Dorsolateral prefrontal cortex (tissue), 120 donors: ENCODE measurements at regions of chr10 and their contacts with region 1.

Region 1: DNA sequence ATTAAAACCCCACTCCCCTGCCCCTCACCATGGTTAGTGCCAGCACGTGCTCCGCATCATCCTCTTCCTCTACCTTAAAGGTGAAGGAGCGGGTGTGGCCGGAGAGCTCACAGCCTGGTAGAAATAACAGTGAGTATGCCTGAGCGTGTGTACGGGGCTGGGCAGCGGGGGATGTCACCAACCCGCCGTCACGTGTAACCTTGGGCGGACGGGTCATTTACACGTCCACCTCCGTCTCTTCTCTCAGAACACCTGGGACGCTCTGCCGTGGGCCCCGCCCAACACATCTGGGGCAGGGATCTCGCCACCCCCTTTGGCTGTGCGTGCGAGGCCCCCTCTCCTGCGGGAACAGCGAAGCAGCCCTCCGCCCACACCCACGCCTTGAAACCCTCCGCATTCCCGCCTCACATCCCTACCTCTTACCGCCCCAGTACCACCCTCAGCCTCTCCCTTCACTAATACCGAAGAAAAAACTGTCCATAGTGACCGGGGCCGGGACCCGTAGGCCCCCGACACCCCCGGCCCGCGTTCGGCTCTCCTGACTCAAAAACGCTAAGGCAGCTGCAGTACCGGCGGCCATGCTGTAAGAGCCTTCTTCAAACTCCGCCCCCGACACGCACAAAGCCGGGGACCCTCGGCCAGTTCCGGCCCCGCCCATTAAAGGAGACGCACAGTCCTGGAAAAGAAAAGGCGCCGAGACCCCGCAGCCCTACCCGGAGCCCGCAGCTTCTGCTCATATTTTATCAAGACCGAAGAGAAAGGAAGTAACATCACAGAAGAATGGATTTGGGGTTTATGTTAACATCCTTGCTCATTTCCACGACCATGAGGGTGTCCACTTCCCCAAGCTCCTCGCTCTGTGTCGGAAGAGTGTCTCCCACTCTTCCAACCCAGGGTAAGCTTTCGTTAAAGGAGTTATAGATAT is at the start of gene NPM3:
- DNase-seq: peak; percentile 67 to 91 (median 85)
- H3K4me3 ChIP-seq: peak within 1 kb of the TSS; percentile 39 to 88 (median 72)
- H3K27ac ChIP-seq: peak within 1 kb of the TSS in 21 of 59 donors; percentile 5 to 80 (median 32)
- H3K27me3 ChIP-seq: peaks cover 0 to 17% (median 3%) of the 10 kb centered on the region in 45 donors
- CTCF ChIP-seq: peak in 27 of 56 donors; percentile 5 to 40 (median 17)
- total RNA-seq, gene NPM3: 4.2 to 25.9 (median 13.8) TPM

Region 2: GRCh38 chr10:101161494-101162299 is 621.4 kb before region 1 on chr10:
- intact Hi-C with region 1: loop called in 1 of 2 experiments (anchors 5 kb)
- DNase-seq: peak; percentile 38 to 80 (median 70)
- H3K4me3 ChIP-seq: peak overlapping the region in 54 of 59 donors; percentile 8 to 68 (median 41)
- H3K27ac ChIP-seq: no peak overlapping the region
- H3K27me3 ChIP-seq: peaks cover 0 to 80% (median 36%) of the 10 kb centered on the region in 45 donors
- CTCF ChIP-seq: peak; percentile 81 to 99 (median 96)

Region 3: GRCh38 chr10:101214446-101215396 is 568.4 kb before region 1 on chr10:
- intact Hi-C with region 1: loop called (anchors 5 kb)
- DNase-seq: peak in 9 of 10 donors; percentile 39 to 70 (median 49)
- H3K4me3 ChIP-seq: peak overlapping the region in 25 of 59 donors; percentile 5 to 52 (median 30)
- H3K27ac ChIP-seq: no peak overlapping the region
- H3K27me3 ChIP-seq: peaks cover 13 to 100% (median 89%) of the 10 kb centered on the region in 45 donors
- CTCF ChIP-seq: peak; percentile 69 to 97 (median 89)

Region 4: DNA sequence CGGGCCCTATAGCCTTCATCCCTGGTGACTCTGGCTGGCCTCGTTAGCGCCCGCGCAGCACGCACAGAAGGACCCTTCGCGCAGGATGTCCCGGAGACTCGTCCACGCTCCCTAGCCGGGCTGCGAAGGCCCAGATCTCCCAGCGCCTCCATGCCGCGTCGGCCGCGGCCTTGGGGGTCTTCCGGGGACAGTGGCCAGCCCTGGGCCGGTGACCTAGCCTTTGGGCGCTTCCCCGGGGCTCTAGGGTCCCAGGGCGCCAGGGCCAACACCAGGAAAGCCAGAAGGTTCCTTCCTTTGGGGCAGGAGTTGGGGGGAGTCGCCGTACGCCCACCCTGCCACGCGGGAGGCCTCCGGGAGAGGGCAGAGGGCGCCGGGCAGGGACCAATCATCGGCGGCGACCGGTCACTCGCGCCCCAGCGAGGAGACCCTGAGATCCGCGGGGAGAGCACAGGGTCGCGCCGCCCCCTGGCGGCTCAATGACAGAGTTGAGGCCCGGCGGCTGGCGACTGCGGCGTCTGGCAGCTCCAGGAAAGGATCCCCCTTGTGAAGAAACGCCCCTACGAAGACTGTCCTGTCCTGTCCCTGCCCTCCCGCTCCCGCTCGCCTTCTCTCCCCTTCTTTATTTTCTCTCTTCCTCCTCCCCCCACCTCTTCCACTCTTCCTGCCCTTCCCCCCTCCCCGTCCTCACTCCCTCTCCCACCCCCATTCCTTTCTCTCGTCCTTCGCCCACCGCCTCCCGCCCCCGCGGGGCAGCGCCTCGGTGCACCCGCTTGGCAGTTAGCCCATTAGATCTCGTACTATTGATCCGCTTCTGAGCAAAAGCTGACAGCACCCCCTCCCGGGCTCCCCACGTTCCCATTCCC is 491.5 kb before region 1 on chr10:
- intact Hi-C with region 1: loop called in 1 of 2 experiments (anchors 10 kb)
- DNase-seq: peak; percentile 40 to 81 (median 66)
- H3K4me3 ChIP-seq: peak overlapping the region; percentile 41 to 85 (median 70)
- H3K27ac ChIP-seq: peak overlapping the region in 56 of 59 donors; percentile 11 to 96 (median 88)
- H3K27me3 ChIP-seq: peaks cover 0 to 6% (median 0%) of the 10 kb centered on the region in 45 donors
- CTCF ChIP-seq: peak; percentile 25 to 78 (median 67)

Region 5: DNA sequence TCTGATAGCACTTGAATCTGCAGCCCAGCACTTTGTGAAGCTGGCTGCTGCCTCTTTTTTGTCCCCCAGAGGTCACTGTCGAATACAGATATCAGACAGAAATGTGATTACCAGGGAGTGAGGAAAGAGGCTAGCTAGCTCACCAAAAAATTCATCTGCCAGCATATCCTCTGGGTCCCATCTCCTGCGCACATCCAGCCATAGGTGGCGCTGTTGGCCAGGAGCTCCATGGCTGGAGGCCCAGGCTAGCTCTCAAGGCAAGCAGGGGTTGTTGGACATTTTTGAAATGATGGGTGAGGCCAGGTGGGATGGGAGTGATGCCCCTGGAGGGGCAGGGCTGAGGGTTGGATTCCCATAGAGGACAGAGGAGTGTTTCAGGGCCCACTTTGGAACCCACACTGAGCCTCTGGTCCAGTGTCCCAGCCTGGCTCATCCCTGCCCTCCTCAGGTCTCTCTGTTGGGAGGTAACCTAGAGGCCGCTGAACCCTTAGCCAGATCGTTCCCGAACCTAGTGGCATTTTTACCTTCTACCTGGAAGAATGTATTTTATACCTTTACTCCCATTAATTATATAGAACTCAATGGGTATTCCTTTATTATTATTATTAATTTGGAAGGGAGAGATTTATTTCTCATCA is 180.2 kb before region 1 on chr10:
- intact Hi-C with region 1: loop called (anchors 1 to 2 kb)
- DNase-seq: peak; percentile 68 to 85 (median 78)
- H3K4me3 ChIP-seq: no peak overlapping the region
- H3K27ac ChIP-seq: peak overlapping the region in 8 of 59 donors; percentile 3 to 62 (median 16)
- H3K27me3 ChIP-seq: no peaks in the 10 kb centered on the region
- CTCF ChIP-seq: peak; percentile 60 to 95 (median 89)

Region 6: GRCh38 chr10:101693978-101694673 is 88.9 kb before region 1 on chr10:
- intact Hi-C with region 1: loop called in 1 of 2 experiments (anchors 5 kb)
- DNase-seq: peak in 8 of 10 donors; percentile 40 to 74 (median 54)
- H3K4me3 ChIP-seq: peak overlapping the region; percentile 47 to 93 (median 84)
- H3K27ac ChIP-seq: peak overlapping the region; percentile 35 to 99 (median 95)
- H3K27me3 ChIP-seq: no peaks in the 10 kb centered on the region
- CTCF ChIP-seq: peak in 1 of 56 donors; percentile 18

Region 7: GRCh38 chr10:101749047-101750016 is 33.7 kb before region 1 on chr10:
- intact Hi-C with region 1: no loop called
- DNase-seq: no peak
- H3K4me3 ChIP-seq: no peak overlapping the region
- H3K27ac ChIP-seq: peak overlapping the region in 13 of 59 donors; percentile 1 to 61 (median 39)
- H3K27me3 ChIP-seq: no peaks in the 10 kb centered on the region
- CTCF ChIP-seq: no peak

Region 8: GRCh38 chr10:101818119-101818871 is 35.2 kb after region 1 on chr10 and contains the start of gene OGA:
- intact Hi-C with region 1: loop called in 1 of 2 experiments (anchors 5 kb)
- DNase-seq: peak; percentile 93 to 99 (median 97)
- H3K4me3 ChIP-seq: peak within 1 kb of the TSS; percentile 61 to 100 (median 99)
- H3K27ac ChIP-seq: peak within 1 kb of the TSS; percentile 68 to 100 (median 97)
- H3K27me3 ChIP-seq: no peaks in the 10 kb centered on the region
- CTCF ChIP-seq: peak in 10 of 56 donors; percentile 0 to 31 (median 8)
- total RNA-seq, gene OGA: 163 to 362 (median 249) TPM

Region 9: GRCh38 chr10:101920546-101920945 is 137.5 kb after region 1 on chr10:
- intact Hi-C with region 1: no loop called
- DNase-seq: no peak
- H3K4me3 ChIP-seq: no peak overlapping the region
- H3K27ac ChIP-seq: no peak overlapping the region
- H3K27me3 ChIP-seq: no peaks in the 10 kb centered on the region
- CTCF ChIP-seq: no peak